Activated CD8-positive, alpha-beta T cell treated with anti-CD3 and anti-CD28 coated beads, Interleukin-2, amount 10 ng/mL, durations not matched to agents 7 days and 5 days (primary cell): ENCODE measurements at regions of chr12 and their contacts with region 1.

Region 1: GRCh38 chr12:104108755-104109445 is 29.1 kb downstream of the NFYB start:
- DNase-seq: peak; percentile 93
- ATAC-seq: peak; percentile 99
- H3K4me3 Mint-ChIP-seq: no peak overlapping the region
- H3K27ac Mint-ChIP-seq: peak overlapping the region; percentile 22
- H3K4me1 Mint-ChIP-seq: peaks cover 12% of the 10 kb centered on the region
- H3K27me3 Mint-ChIP-seq: no peaks in the 10 kb centered on the region

Region 2: DNA sequence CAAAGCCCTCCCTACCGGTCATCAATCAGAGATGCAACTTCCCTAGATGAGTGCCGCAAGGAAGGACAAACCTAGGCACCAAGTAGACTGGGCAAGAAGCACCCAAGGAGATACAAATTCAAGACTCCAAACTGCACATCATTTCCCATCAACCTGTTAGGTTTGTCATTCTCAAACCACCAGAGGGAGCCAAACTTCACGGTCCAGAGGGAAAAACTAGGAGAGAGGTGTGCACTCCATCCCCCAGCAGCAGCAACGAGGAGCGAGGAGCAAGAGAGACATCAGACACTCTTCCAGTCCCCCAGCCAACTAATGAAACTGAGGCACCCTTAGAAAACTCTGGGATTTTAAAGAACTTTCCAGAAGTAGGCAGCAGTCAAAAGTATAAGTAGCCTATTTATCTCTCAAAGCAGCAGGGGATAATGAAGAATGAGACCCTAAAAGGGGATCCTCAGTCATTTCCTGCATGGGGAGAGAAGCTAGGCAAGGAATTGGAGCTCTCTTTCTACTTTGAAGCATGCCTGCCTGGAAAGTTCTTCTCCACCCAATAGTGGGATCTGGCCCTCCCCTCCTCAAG is 230.9 kb before region 1 on chr12:
- CTCF ChIA-PET with region 1: interaction called, 63 read pairs
- POLR2A ChIA-PET with region 1: no interaction called
- DNase-seq: peak; percentile 70
- ATAC-seq: peak; percentile 91
- H3K4me3 Mint-ChIP-seq: peak overlapping the region; percentile 6
- H3K27ac Mint-ChIP-seq: no peak overlapping the region
- H3K4me1 Mint-ChIP-seq: peaks cover 36% of the 10 kb centered on the region
- H3K27me3 Mint-ChIP-seq: peaks cover 4% of the 10 kb centered on the region

Region 3: GRCh38 chr12:103956516-103957027 is 152.3 kb before region 1 on chr12:
- CTCF ChIA-PET with region 1: interaction called, 11 read pairs
- POLR2A ChIA-PET with region 1: no interaction called
- DNase-seq: peak; percentile 28
- ATAC-seq: no peak
- H3K4me3 Mint-ChIP-seq: peak overlapping the region; percentile 98
- H3K27ac Mint-ChIP-seq: peak overlapping the region; percentile 98
- H3K4me1 Mint-ChIP-seq: peaks cover 41% of the 10 kb centered on the region
- H3K27me3 Mint-ChIP-seq: no peaks in the 10 kb centered on the region

Region 4: DNA sequence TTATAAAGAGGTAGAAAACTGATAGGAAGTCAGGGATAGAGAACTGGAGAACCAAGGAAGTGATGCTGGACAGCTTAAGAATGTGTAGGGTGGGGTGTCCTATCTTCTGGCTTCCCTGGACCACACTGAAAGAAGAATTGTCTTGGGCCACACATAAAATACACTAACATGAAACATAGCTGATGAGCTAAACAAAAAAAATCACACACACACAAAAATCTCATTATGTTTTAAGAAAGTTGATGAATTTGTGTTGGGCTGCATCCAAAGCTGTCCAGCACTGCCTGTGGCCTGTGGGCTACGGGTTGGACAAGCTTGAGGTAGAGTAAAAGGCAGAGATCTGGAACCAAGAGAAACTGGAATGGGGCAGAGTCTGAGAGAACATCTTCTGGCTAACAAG is 66.3 kb before region 1 on chr12:
- CTCF ChIA-PET with region 1: interaction called, 10 read pairs
- POLR2A ChIA-PET with region 1: no interaction called
- DNase-seq: no peak
- ATAC-seq: no peak
- H3K4me3 Mint-ChIP-seq: no peak overlapping the region
- H3K27ac Mint-ChIP-seq: no peak overlapping the region
- H3K4me1 Mint-ChIP-seq: peaks cover 9% of the 10 kb centered on the region
- H3K27me3 Mint-ChIP-seq: peaks cover 18% of the 10 kb centered on the region

Region 5: DNA sequence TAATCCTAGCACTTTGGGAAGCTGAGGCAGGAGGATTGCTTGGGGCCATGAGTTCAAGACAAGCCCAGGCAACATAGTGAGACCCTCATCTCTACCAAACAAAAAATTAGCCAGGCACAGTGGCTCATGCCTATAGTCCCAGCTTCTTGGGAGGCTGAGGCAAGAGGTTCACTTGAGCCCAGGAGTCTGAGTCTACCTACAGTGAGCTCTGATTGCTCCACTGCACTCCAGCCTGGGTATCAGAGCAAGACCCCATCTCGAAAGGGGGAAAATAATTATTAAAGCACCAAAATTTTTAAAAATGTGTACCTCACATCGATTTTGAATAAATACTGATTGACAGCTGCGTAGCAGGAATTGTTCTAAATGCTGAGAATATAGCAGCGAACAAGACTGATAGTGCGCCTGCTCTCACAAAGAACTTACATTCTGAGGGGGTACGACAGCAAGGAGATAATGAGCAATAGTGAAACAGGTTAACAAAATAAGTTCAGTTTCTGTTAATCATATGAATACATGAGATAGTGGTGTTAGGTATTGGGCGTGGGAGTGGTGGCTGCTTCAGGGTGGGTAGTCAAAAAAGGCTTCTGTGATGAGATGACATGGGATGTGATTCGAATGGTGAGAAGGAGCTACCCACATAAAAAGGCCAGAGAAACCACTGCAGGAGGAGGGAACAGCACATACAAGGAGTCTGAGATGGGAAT is 25.0 kb before region 1 on chr12:
- CTCF ChIA-PET with region 1: interaction called, 41 read pairs
- POLR2A ChIA-PET with region 1: no interaction called
- DNase-seq: no peak
- ATAC-seq: no peak
- H3K4me3 Mint-ChIP-seq: no peak overlapping the region
- H3K27ac Mint-ChIP-seq: no peak overlapping the region
- H3K4me1 Mint-ChIP-seq: peaks cover 12% of the 10 kb centered on the region
- H3K27me3 Mint-ChIP-seq: no peaks in the 10 kb centered on the region

Region 6: GRCh38 chr12:104137913-104138796 is 29.3 kb after region 1 on chr12 and contains the start of gene NFYB:
- CTCF ChIA-PET with region 1: interaction called, 10 read pairs
- POLR2A ChIA-PET with region 1: no interaction called
- DNase-seq: peak; percentile 95
- ATAC-seq: peak; percentile 98
- H3K4me3 Mint-ChIP-seq: peak within 1 kb of the TSS; percentile 85
- H3K27ac Mint-ChIP-seq: peak within 1 kb of the TSS; percentile 92
- H3K4me1 Mint-ChIP-seq: peaks cover 20% of the 10 kb centered on the region
- H3K27me3 Mint-ChIP-seq: peaks cover 18% of the 10 kb centered on the region
- total RNA-seq, gene NFYB: 25.4 to 29.8 TPM